ENCODE measurements at regions of chr2 and their contacts with region 1.

Region 1: GRCh38 chr2:170324640-170325046 is 146.7 kb downstream of the MYO3B start:
- DNase-seq: peak; percentile 50 to 63
- H3K4me3 ChIP-seq: no peak overlapping the region
- H3K4me3 Mint-ChIP-seq: no peak overlapping the region
- H3K27ac Mint-ChIP-seq: no peak overlapping the region
- H3K4me1 ChIP-seq: peaks cover 7% of the 10 kb centered on the region; the same call in 1 of the 2 replicates
- H3K4me1 Mint-ChIP-seq: no peaks in the 10 kb centered on the region
- H3K27me3 ChIP-seq: no peaks in the 10 kb centered on the region; the same call in 1 of the 2 replicates
- H3K27me3 Mint-ChIP-seq: no peaks in the 10 kb centered on the region
- CTCF ChIP-seq: peak; percentile 78 to 87

Region 2: GRCh38 chr2:170313347-170313991 is 11.2 kb before region 1 on chr2:
- CTCF ChIA-PET with region 1: no interaction called
- POLR2A ChIA-PET with region 1: no interaction called
- intact Hi-C with region 1: no loop called
- DNase-seq: no peak
- H3K4me3 ChIP-seq: no peak overlapping the region
- H3K4me3 Mint-ChIP-seq: no peak overlapping the region
- H3K27ac Mint-ChIP-seq: no peak overlapping the region
- H3K4me1 ChIP-seq: no peaks in the 10 kb centered on the region; the same call in 1 of the 2 replicates
- H3K4me1 Mint-ChIP-seq: peaks cover 14% of the 10 kb centered on the region
- H3K27me3 ChIP-seq: no peaks in the 10 kb centered on the region
- H3K27me3 Mint-ChIP-seq: no peaks in the 10 kb centered on the region
- CTCF ChIP-seq: no peak

Region 3: DNA sequence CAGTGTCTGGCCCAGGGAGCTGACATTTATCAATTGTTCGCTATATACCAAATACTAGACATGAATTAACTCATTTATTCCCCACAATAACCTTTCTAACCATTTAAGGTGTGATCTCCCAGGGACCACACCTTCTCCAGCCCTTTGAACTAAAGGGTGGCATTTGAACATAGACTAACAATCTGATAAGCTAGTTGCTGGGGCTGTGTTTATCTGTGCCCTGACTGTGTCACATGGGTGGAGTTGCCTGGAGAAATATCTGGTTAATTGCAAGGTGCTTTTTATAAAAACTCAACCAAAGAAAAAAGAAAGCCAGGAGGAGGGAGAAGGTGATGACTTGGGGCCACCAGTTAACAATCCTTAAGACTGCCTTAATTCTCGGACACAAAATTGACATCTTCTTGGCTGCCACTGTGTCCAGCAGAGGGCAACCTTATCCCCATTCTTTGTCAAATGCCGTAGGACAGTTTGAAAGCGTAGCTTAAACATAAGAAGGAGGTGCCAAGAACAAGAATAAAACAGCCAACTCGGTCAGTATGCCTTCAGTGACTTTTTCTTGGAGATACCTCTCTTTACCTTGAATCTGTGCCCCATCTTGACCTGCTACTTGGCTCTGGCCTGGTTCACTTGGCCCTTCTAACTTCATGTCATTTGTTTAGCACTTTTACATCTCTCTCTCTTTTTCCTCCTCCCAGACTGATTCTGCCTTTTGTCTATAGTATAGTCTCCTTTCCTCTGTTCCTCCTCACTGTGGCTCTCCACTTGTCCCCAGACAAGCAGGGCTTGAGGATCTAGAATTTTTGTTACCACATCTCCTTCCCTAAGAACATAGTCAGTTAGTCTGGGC is 36.7 kb after region 1 on chr2:
- CTCF ChIA-PET with region 1: interaction called, 28 read pairs
- POLR2A ChIA-PET with region 1: no interaction called
- intact Hi-C with region 1: loop called (anchors 1 kb)
- DNase-seq: peak; percentile 58 to 70
- H3K4me3 ChIP-seq: no peak overlapping the region
- H3K4me3 Mint-ChIP-seq: no peak overlapping the region
- H3K27ac Mint-ChIP-seq: no peak overlapping the region
- H3K4me1 ChIP-seq: no peaks in the 10 kb centered on the region
- H3K4me1 Mint-ChIP-seq: peaks cover 10% of the 10 kb centered on the region
- H3K27me3 ChIP-seq: no peaks in the 10 kb centered on the region
- H3K27me3 Mint-ChIP-seq: no peaks in the 10 kb centered on the region
- CTCF ChIP-seq: peak; percentile 81 to 87

Region 4: DNA sequence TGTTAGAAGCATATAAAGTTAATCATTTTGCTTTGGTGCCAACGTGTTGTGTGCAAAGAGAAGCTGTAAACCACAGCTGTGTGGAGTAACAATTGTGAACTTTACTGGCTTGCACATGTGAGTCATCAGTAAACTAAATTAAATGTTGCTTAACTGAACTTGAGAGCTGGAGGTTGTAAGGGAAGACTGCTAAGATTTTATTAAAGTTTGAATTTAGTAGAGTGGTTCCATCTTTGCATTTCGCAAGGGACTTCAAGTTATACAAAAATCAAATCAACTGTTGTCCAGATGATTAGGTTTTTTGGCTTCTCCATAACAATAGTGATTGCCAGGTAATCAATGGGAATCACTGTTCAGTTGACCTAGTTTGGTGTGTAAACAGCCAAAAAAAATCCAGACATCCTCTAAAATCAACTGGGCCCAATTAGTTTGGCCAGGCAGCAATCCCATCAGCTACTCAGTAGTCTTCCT is 100.7 kb after region 1 on chr2:
- CTCF ChIA-PET with region 1: no interaction called
- POLR2A ChIA-PET with region 1: no interaction called
- intact Hi-C with region 1: no loop called
- DNase-seq: no peak
- H3K4me3 ChIP-seq: no peak overlapping the region
- H3K4me3 Mint-ChIP-seq: no peak overlapping the region
- H3K27ac Mint-ChIP-seq: no peak overlapping the region
- H3K4me1 ChIP-seq: 0 out of 2 replicates have a peak, but pooled peaks cover 6% of the 10 kb centered on the region
- H3K4me1 Mint-ChIP-seq: no peaks in the 10 kb centered on the region
- H3K27me3 ChIP-seq: no peaks in the 10 kb centered on the region
- H3K27me3 Mint-ChIP-seq: no peaks in the 10 kb centered on the region
- CTCF ChIP-seq: no peak

Region 5: GRCh38 chr2:170922634-170923494 is 598.2 kb after region 1 on chr2:
- CTCF ChIA-PET with region 1: no interaction called
- POLR2A ChIA-PET with region 1: no interaction called
- intact Hi-C with region 1: no loop called
- DNase-seq: no peak
- H3K4me3 ChIP-seq: no peak overlapping the region
- H3K4me3 Mint-ChIP-seq: no peak overlapping the region
- H3K27ac Mint-ChIP-seq: no peak overlapping the region
- H3K4me1 ChIP-seq: peaks cover 4% of the 10 kb centered on the region
- H3K4me1 Mint-ChIP-seq: peaks cover 10% of the 10 kb centered on the region
- H3K27me3 ChIP-seq: no peaks in the 10 kb centered on the region
- H3K27me3 Mint-ChIP-seq: no peaks in the 10 kb centered on the region
- CTCF ChIP-seq: no peak